ENCODE measurements at regions of chr17 and their contacts with region 1.

Region 1: DNA sequence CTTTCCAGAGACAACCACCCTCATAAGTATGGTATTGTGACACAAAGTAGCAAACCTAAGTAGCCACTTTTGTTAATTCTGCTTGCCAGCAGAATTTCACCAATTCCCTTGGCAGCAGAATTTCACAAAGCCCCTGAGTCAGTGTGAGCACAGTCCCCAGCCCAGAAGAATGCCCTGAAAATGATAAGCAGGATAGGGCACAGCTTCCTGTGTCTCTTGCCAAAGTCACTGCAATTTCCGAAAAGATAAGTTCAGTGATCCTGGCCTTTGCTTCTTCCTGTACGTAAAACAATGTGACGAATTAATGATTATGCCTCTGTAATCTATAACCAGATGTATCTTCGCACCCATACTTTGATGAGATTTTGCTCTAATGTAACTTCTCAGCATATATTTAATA is 16.0 kb upstream of the WIPF2 start:
- DNase-seq: no peak
- H3K4me3 ChIP-seq: no peak overlapping the region
- H3K27ac ChIP-seq: no peak overlapping the region
- H3K4me1 ChIP-seq: peaks cover 8% of the 10 kb centered on the region
- H3K27me3 ChIP-seq: no peaks in the 10 kb centered on the region
- CTCF ChIP-seq: no peak
- POLR2A ChIP-seq: no peak

Region 2: DNA sequence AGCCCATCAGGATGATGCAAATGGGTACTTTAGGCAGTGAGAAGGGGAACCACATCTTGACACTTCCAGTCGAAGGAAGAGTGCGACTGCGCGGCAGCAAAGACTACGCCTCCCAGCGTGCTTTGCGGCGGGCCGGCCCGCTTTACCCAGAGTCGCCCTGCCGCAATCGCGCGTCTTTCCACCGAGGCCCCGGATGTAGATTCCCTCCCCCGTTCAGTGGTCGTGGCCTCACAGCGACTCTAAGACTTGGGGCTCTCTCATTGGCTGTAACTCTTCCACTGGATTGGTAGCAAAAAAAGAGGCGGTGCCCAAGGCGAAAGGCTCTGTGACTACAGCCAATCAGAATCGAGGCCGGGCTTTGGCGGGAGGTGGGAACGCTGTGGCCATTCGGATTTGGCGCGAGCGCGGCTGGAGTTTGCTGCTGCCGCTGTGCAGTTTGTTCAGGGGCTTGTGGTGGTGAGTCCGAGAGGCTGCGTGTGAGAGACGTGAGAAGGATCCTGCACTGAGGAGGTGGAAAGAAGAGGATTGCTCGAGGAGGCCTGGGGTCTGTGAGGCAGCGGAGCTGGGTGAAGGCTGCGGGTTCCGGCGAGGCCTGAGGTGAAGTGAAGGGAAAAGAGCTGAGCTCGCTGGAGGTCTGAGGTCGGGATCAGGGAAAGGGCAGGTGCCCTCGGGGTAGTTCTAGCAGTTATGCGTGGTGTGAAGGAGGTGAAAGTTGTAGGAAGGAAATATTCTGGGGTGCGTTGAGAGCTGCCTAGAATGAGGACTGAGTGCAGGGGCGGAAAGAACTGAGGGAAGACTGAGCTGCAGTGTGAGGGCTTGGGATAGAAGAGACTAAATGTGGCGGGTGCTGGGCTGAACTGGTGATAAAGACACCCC is 84.6 kb after region 1 on chr17 and contains the start of gene CDC6:
- intact Hi-C with region 1: loop called (anchors 5 kb)
- DNase-seq: peak; percentile 99
- H3K4me3 ChIP-seq: peak within 1 kb of the TSS; percentile 52 to 66
- H3K27ac ChIP-seq: peak within 1 kb of the TSS in 1 of 2 donors; percentile 34
- H3K4me1 ChIP-seq: no peaks in the 10 kb centered on the region
- H3K27me3 ChIP-seq: no peaks in the 10 kb centered on the region
- CTCF ChIP-seq: peak in 1 of 3 experiments; percentile 17
- POLR2A ChIP-seq: no peak
- total RNA-seq, gene CDC6: 12.4 to 22.8 TPM